Activated naive CD4-positive, alpha-beta T cell treated with anti-CD3 and anti-CD28 coated beads for 36 hours (primary cell): ENCODE measurements at regions of chr7 and their contacts with region 1.

Region 1: DNA sequence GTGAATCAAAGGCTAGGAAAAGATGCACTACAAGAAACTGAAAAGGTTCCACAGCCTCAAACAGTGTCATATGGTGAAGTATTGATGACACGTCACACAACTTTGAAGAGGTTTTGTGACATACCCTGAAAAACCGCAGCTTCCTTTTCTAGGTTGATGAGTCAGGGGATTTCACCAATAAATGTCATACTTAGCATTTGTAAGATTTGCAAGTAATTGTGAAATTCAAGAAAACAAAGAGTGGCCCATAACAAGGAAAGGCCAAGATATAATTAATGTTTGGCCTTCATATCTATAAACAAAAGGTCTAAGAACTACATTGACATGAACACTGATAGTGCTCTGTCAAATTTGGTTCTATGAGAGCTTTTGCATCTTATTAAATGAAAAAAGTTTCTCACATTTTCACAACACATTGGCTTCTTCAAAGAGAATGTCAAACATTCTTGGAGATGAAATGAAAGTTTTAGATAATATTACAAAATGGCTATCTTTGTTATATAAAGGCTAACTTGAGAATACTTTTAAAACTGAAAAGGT is 62.0 kb upstream of the NAMPT start:
- DNase-seq: peak; percentile 75
- H3K4me3 Mint-ChIP-seq: peak overlapping the region; percentile 15
- H3K27ac Mint-ChIP-seq: peak overlapping the region; percentile 97
- H3K4me1 Mint-ChIP-seq: peaks cover 55% of the 10 kb centered on the region
- H3K27me3 Mint-ChIP-seq: peaks cover 6% of the 10 kb centered on the region

Region 2: GRCh38 chr7:105013221-105013815 is 1333.4 kb before region 1 on chr7:
- CTCF ChIA-PET with region 1: no interaction called
- intact Hi-C with region 1: loop called (anchors 2 kb)
- DNase-seq: peak; percentile 94
- H3K4me3 Mint-ChIP-seq: peak overlapping the region; percentile 95
- H3K27ac Mint-ChIP-seq: peak overlapping the region; percentile 99
- H3K4me1 Mint-ChIP-seq: peaks cover 25% of the 10 kb centered on the region
- H3K27me3 Mint-ChIP-seq: no peaks in the 10 kb centered on the region

Region 3: DNA sequence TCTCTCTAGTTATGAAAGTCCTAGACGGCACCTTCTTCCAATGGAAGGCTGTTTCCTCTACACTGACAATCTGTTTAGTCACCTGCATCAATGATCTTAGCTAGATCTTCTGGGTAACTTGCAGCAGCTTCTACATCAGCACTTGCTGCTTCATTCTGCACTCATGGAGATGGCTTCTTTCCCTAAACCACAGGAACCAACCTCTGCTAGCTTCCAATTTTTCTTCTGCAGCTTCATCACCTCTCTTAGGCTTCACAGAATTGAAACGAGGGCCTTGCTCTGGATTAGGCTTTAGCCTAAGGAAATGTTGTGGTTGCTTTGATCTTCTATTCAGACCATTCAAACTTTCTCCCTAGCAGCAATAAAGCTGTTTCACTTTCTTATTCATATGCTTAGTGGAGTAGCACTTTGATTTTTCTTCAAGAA is 86.6 kb before region 1 on chr7:
- CTCF ChIA-PET with region 1: no interaction called
- intact Hi-C with region 1: loop called (anchors 1 kb)
- DNase-seq: no peak
- H3K4me3 Mint-ChIP-seq: no peak overlapping the region
- H3K27ac Mint-ChIP-seq: peak overlapping the region; percentile 76
- H3K4me1 Mint-ChIP-seq: peaks cover 79% of the 10 kb centered on the region
- H3K27me3 Mint-ChIP-seq: no peaks in the 10 kb centered on the region

Region 4: GRCh38 chr7:106367018-106367420 is 20.3 kb after region 1 on chr7:
- CTCF ChIA-PET with region 1: interaction called, 4 read pairs
- intact Hi-C with region 1: loop called (anchors 1 kb)
- DNase-seq: no peak
- H3K4me3 Mint-ChIP-seq: no peak overlapping the region
- H3K27ac Mint-ChIP-seq: peak overlapping the region; percentile 70
- H3K4me1 Mint-ChIP-seq: peaks cover 44% of the 10 kb centered on the region
- H3K27me3 Mint-ChIP-seq: peaks cover 23% of the 10 kb centered on the region

Region 5: GRCh38 chr7:106448992-106449859 is 102.5 kb after region 1 on chr7:
- CTCF ChIA-PET with region 1: no interaction called
- intact Hi-C with region 1: loop called (anchors 1 kb)
- DNase-seq: no peak
- H3K4me3 Mint-ChIP-seq: no peak overlapping the region
- H3K27ac Mint-ChIP-seq: peak overlapping the region; percentile 83
- H3K4me1 Mint-ChIP-seq: peaks cover 24% of the 10 kb centered on the region
- H3K27me3 Mint-ChIP-seq: peaks cover 28% of the 10 kb centered on the region

Region 6: GRCh38 chr7:106563466-106564150 is 216.9 kb after region 1 on chr7:
- CTCF ChIA-PET with region 1: no interaction called
- intact Hi-C with region 1: no loop called
- DNase-seq: no peak
- H3K4me3 Mint-ChIP-seq: no peak overlapping the region
- H3K27ac Mint-ChIP-seq: no peak overlapping the region
- H3K4me1 Mint-ChIP-seq: peaks cover 11% of the 10 kb centered on the region
- H3K27me3 Mint-ChIP-seq: peaks cover 5% of the 10 kb centered on the region

Region 7: GRCh38 chr7:106659963-106660861 is 313.5 kb after region 1 on chr7:
- CTCF ChIA-PET with region 1: no interaction called
- intact Hi-C with region 1: loop called (anchors 5 kb)
- DNase-seq: peak; percentile 87
- H3K4me3 Mint-ChIP-seq: peak overlapping the region; percentile 87
- H3K27ac Mint-ChIP-seq: peak overlapping the region; percentile 95
- H3K4me1 Mint-ChIP-seq: peaks cover 23% of the 10 kb centered on the region
- H3K27me3 Mint-ChIP-seq: no peaks in the 10 kb centered on the region

Region 8: GRCh38 chr7:106767498-106768323 is 421.0 kb after region 1 on chr7:
- CTCF ChIA-PET with region 1: no interaction called
- intact Hi-C with region 1: loop called (anchors 1 kb)
- DNase-seq: peak; percentile 25
- H3K4me3 Mint-ChIP-seq: peak overlapping the region; percentile 20
- H3K27ac Mint-ChIP-seq: peak overlapping the region; percentile 13
- H3K4me1 Mint-ChIP-seq: peaks cover 43% of the 10 kb centered on the region
- H3K27me3 Mint-ChIP-seq: no peaks in the 10 kb centered on the region